ENCODE measurements at regions of chr6 and their contacts with region 1.

Region 1: GRCh38 chr6:122530440-122531046 is 58.9 kb upstream of the SERINC1 start:
- DNase-seq: no peak

Region 2: DNA sequence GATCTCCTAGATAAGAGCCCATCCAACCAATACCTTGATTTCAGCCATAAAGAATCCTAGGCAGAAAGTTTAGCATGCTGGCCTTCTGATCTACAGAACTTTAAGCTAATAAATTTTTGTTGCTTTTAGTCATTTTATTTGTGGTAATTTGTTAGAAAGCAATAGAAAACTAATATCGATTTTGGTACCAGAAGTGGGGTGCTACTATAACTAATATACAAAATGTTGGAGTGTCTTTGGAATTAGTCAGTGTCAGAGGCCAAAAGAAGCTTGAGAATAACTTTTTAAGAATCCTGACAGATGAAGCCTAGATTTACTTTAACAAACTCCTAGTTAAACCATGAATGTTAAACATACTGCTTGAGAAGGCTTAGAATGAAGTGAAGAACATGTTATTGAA is 214.7 kb before region 1 on chr6:
- intact Hi-C with region 1: no loop called
- DNase-seq: no peak

Region 3: DNA sequence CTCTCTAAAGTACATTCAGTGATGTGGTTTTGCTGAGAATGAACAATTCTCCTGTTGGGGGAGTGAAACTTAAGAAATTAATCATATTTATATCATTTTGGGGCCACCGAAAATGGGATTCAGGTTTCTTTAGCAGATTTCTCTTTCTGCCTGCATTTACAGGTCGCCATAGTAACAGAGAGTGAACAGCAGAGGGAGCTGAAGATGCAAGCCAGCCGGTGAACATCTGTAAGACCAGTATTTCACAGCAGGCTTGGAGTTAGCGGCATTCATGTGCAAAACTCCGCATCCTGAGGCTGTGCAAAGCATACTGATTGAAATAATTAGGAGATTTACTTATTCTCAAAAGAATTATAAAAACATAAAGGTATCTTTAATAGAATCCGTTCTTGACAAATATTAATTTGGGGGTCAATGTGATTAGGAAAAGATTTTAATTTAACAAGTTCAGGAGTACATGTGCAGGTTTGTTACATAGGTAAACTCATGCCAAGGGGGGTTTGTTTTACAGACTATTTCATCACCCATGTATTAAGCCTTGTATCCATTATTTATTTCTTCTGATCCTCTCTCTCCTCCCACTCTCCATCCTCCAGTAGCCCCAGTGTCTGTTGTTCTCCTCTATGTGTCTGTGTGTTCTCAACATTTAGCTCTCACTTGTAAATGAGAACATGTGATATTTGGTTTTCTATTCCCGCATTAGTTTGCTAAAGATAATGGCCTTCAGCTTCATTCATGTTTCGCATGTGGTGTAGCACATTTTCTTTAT is 148.9 kb before region 1 on chr6:
- intact Hi-C with region 1: loop called (anchors 2 kb)
- DNase-seq: no peak

Region 4: DNA sequence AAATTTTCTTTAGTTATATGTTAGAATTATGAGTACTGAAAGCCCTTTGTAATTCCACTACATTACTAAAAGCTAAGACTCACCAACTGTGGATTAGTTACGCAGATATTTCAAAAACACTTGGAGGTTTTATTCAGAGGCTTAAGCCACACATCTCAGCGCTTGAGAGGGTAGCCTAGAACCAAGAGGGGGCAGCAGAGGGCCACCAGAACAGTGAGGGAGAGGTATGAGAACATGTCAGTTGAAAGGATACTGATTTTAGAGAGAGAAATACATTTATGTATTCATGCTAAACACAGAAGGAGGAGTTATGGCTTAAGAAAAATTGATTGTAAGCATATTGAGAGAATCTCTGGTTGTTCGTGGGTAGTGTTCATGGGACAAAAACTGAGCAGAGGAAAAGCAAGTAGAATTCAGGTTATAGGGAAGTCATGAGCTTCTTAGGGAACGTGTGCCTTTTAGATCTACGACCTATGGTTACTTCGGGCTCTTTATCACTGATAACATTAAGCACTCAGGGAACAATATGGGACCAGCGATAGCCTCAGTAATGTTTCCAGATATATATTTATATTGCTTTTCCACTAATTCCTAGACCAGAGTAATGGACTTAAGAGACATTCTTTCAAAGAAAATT is 38.5 kb before region 1 on chr6:
- intact Hi-C with region 1: loop called (anchors 5 kb)
- DNase-seq: no peak

Region 5: GRCh38 chr6:122580745-122581144 is 50.2 kb after region 1 on chr6:
- intact Hi-C with region 1: no loop called
- DNase-seq: no peak